ENCODE measurements at regions of chr7 and their contacts with region 1.

Region 1: GRCh38 chr7:140165422-140165821 is 11.4 kb downstream of the KDM7A start:
- DNase-seq: peak; percentile 42
- H3K4me3 Mint-ChIP-seq: peak overlapping the region; percentile 39
- H3K27ac Mint-ChIP-seq: peak overlapping the region; percentile 95
- H3K4me1 Mint-ChIP-seq: peaks cover 79% of the 10 kb centered on the region
- H3K27me3 Mint-ChIP-seq: no peaks in the 10 kb centered on the region

Region 2: GRCh38 chr7:139431010-139431409 is 734.4 kb before region 1 on chr7:
- CTCF ChIA-PET with region 1: no interaction called
- intact Hi-C with region 1: no loop called
- DNase-seq: no peak
- H3K4me3 Mint-ChIP-seq: no peak overlapping the region
- H3K27ac Mint-ChIP-seq: no peak overlapping the region
- H3K4me1 Mint-ChIP-seq: peaks cover 5% of the 10 kb centered on the region
- H3K27me3 Mint-ChIP-seq: no peaks in the 10 kb centered on the region

Region 3: DNA sequence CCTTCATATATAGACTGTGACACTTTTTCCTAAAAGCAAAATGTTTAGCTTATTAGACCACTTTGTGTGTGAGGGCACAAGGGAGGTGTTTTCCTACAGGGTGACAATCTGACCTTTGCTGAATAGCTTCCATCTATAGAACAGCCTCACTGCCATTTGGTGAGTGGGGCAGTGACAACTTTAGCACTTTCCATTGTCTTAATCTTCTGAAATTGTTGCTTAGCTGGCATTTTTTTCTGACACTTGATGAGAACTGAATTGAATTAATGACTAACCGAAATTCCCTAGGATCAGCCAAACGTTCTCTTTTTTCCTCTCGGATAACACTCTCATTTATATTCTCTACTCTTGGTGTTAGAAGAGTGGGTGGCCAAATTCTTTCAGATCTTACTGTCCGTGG is 18.8 kb before region 1 on chr7:
- CTCF ChIA-PET with region 1: interaction called, 6 read pairs
- intact Hi-C with region 1: loop called (anchors 2 kb)
- DNase-seq: no peak
- H3K4me3 Mint-ChIP-seq: no peak overlapping the region
- H3K27ac Mint-ChIP-seq: no peak overlapping the region
- H3K4me1 Mint-ChIP-seq: peaks cover 65% of the 10 kb centered on the region
- H3K27me3 Mint-ChIP-seq: no peaks in the 10 kb centered on the region

Region 4: GRCh38 chr7:140425718-140426117 is 260.3 kb after region 1 on chr7:
- CTCF ChIA-PET with region 1: no interaction called
- intact Hi-C with region 1: no loop called
- DNase-seq: no peak
- H3K4me3 Mint-ChIP-seq: no peak overlapping the region
- H3K27ac Mint-ChIP-seq: no peak overlapping the region
- H3K4me1 Mint-ChIP-seq: no peaks in the 10 kb centered on the region
- H3K27me3 Mint-ChIP-seq: no peaks in the 10 kb centered on the region